ENCODE measurements at regions of chr6 and their contacts with region 1.

Region 1: GRCh38 chr6:37393381-37393929 is 39.6 kb upstream of the CMTR1 start:
- DNase-seq: no peak
- CTCF ChIP-seq: no peak

Region 2: DNA sequence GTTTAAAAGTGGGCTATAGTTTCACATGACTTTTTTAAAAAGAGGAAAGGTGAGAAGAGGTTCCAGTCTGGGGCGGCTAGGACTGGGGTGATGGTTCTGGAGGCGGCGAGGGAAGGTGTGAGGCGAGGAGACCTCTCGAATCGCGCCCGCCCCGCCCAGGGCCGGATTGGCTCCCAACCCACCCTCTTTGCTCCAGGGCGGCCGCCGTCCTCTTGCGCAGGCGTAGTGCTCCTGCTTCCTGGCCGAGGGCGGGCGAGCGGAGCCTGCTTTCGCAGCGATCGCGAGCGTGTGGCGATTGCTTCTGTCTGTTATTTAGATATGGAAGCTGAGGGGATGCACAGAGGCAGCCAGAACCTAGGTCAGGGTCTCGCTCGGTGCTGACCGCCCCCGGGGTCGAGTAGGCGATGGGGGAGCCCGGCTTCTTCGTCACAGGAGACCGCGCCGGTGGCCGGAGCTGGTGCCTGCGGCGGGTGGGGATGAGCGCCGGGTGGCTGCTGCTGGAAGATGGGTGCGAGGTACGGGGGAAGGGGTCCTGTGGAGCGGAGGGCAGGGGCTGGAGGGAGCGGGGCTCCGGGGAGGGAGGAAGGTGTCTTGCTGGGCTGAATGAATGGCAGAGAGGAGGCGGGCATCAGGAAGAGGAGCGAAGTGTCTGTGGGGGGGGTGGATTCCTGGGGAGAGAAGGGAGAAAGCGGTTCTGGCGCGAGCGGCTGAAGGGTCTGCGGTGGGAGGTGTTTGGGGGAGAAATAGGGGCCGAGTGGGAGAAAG is 39.5 kb before region 1 on chr6 and contains the start of gene RNF8:
- CTCF ChIA-PET with region 1: no interaction called
- POLR2A ChIA-PET with region 1: no interaction called
- DNase-seq: peak; percentile 99
- CTCF ChIP-seq: no peak

Region 3: GRCh38 chr6:37373822-37374471 is 19.5 kb before region 1 on chr6:
- CTCF ChIA-PET with region 1: interaction called, 13 read pairs
- POLR2A ChIA-PET with region 1: no interaction called
- DNase-seq: no peak
- CTCF ChIP-seq: no peak

Region 4: GRCh38 chr6:37426945-37427510 is 33.6 kb after region 1 on chr6:
- CTCF ChIA-PET with region 1: no interaction called
- POLR2A ChIA-PET with region 1: no interaction called
- DNase-seq: no peak
- CTCF ChIP-seq: no peak